ENCODE measurements at regions of chr20 and their contacts with region 1.

Region 1: DNA sequence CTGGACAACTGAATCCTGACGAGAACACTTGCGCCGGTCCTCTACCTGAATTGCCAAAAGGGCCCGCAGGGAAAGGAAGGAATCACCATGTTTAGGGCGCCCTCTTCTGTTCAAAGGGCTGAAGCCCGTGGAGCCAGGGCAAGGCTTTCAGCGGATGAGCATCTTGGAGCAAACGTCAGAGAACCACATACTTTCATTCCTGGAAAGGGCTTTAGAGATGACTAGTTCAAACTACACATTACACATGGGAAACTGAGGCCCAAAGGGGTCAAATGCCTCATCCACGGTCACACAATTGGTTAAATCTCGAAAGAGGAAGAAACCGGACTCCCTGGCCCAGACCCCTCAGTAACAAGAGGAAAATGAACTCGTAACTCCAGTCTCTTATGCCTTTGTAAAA is 11.5 kb upstream of the ZNF133 start:
- DNase-seq: peak; percentile 70 to 87
- H3K4me3 ChIP-seq: no peak overlapping the region
- H3K27ac ChIP-seq: no peak overlapping the region
- H3K4me1 ChIP-seq: peaks cover 15% of the 10 kb centered on the region
- H3K27me3 ChIP-seq: no peaks in the 10 kb centered on the region
- CTCF ChIP-seq: peak; percentile 96

Region 2: DNA sequence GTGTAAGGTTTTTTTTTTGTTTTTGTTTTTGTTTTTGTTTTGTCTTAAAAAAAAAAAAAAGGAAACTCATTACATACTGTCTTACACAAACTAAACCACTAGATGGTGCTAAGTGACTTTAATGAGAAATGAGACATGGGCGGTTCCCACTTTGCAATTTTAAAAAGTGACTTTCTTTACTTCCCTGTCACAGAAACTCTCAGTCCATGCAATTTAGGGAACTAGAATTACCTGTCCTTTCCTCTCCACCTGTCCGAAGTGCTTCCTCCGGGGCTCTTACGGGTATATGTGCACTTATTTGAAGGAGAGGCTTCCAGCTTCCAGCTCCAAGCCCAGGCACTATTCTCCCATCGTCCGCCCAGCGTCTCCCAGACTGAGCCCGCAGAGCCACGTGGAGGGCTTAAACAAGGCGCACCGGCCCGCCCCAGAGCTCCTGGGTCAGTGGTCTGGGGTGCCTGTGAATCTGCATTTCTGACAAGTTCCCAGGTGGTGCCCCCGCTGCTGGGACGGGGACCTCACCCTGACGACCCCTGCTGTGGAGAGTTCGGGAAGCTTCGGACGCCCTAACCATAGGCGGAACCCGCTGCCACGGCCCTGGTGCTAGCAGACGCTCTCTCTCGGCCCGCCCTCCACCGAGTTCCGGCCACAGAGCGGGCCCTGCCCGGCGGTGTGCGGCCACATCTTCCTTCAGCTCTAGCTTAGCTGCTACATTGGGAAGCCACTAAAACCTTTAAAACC is 771.8 kb before region 1 on chr20:
- CTCF ChIA-PET with region 1: no interaction called
- POLR2A ChIA-PET with region 1: no interaction called
- intact Hi-C with region 1: loop called (anchors 10 kb)
- DNase-seq: peak; percentile 42 to 43
- H3K4me3 ChIP-seq: peak overlapping the region; percentile 54; the same call in 1 of the 2 replicates
- H3K27ac ChIP-seq: no peak overlapping the region
- H3K4me1 ChIP-seq: 0 out of 2 replicates have a peak, but pooled peaks cover 5% of the 10 kb centered on the region
- H3K27me3 ChIP-seq: no peaks in the 10 kb centered on the region
- CTCF ChIP-seq: peak; percentile 85

Region 3: DNA sequence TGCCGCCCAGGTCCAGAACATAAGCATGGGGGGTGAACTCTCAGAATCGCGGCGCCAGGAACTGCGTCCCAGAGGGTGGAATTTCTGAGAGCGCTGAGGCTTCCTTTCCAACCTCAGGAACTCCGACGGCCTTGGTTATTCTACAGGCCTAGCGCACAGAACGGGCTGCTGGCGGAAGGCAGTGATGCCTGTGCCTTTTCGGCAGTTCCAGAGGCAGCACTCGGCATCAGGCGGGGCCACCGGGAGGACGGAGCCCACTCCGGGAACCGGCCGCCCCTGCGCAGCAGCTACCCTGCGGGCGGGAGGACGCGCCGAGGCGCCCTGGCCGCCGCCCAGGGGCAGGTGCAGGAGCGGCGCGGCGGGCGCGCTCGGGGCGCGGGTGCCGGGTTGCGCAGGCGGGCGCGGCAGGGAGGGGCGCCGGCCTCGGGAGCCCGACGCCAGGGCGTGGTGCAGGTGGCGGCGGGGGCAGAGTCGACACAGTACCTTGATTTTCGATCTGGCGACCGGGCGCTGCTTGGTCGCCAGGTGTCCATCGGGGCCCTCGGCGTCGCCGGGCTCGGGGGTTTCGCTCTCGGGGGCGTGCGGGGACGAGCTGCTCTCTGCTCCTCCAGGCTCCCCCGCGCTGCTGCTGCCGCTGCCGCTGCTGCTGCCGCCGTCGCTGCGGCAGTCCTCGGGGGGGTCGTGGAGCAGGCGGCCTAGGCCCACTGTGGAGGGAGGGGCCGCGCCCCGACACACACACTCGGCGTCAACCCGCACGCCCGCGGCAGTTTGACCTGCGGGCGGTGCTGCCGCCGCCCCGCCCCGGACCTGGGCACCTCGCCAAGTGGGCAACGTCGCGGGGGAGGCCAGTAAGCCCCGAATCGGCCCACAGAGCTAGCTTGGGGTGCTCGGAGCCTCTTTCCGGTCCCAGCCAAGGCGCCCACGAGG is 220.4 kb before region 1 on chr20:
- CTCF ChIA-PET with region 1: no interaction called
- POLR2A ChIA-PET with region 1: no interaction called
- intact Hi-C with region 1: loop called (anchors 2 kb)
- DNase-seq: peak in 1 of 2 experiments; percentile 70
- H3K4me3 ChIP-seq: peak overlapping the region; percentile 95
- H3K27ac ChIP-seq: no peak overlapping the region
- H3K4me1 ChIP-seq: peaks cover 52% of the 10 kb centered on the region
- H3K27me3 ChIP-seq: no peaks in the 10 kb centered on the region
- CTCF ChIP-seq: no peak

Region 4: GRCh38 chr20:18197382-18198131 is 79.3 kb before region 1 on chr20:
- CTCF ChIA-PET with region 1: interaction called, 5 read pairs
- POLR2A ChIA-PET with region 1: interaction called, 5 read pairs
- intact Hi-C with region 1: loop called (anchors 1 kb)
- DNase-seq: peak; percentile 91 to 96
- H3K4me3 ChIP-seq: peak overlapping the region; percentile 26; the same call in 1 of the 2 replicates
- H3K27ac ChIP-seq: peak overlapping the region; percentile 86
- H3K4me1 ChIP-seq: peaks cover 22% of the 10 kb centered on the region
- H3K27me3 ChIP-seq: no peaks in the 10 kb centered on the region
- CTCF ChIP-seq: peak; percentile 43

Region 5: DNA sequence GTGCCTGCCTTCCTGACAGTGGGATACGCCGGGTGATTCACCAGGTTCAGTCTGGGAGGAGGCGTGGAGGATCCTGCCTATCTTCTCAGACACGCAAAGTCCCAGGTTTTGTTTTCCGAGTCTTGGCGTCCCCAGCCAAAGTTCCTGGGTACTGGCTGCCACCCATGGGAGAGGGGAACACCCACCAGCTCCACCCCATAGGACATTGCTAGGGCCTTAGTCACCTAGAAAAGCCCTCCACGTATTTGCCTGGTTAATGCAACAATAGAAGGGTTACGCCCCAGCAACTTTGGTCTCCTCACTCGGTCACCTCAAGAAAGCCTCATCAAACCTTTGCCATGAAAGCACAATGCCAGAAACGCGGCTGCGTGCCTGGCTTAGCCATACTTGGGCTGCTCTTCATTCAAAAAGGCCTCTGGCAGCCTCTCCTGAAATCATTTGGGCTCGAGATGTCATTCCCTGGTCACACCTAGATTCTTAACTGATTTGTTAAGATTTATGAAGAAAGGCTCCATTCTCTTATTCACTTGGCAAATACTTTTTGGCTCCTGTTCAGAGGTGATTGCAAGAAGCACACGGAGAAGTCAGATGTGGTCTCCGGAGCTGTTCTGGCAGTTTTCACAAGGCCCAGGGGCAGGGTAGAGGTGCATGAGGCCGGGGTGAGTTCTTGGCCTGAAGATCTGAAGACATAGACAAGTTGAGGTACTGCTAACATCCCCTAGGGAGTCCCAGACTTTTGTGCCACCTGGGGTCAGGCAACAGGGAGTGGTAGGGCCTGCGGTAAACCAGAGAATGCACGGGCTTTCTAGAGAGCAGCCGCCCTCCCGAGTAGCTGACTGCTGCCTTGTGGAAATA is 24.0 kb before region 1 on chr20:
- CTCF ChIA-PET with region 1: no interaction called
- POLR2A ChIA-PET with region 1: no interaction called
- intact Hi-C with region 1: loop called (anchors 1 kb)
- DNase-seq: peak; percentile 95 to 100
- H3K4me3 ChIP-seq: peak overlapping the region; percentile 34; the same call in 1 of the 2 replicates
- H3K27ac ChIP-seq: peak overlapping the region; percentile 96
- H3K4me1 ChIP-seq: peaks cover 40% of the 10 kb centered on the region
- H3K27me3 ChIP-seq: no peaks in the 10 kb centered on the region
- CTCF ChIP-seq: no peak

Region 6: DNA sequence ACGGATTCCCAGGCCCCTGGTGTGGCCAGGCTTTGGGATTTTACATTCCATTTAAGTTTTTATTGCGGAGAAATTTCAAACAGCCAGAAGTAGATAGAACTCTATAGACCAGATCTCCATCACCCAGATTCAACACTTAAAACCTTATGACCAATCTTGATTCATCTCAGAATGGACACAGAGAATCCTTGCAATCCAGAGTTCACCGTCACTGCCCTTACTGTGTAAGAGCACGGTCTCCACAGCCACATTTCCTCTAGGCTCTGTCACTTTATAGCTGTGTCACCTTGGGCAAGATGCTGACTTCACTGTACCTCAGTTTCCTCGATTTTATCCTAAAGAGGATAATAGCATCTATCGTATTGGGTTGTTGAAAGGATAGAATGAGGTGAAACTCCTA is 12.5 kb after region 1 on chr20:
- CTCF ChIA-PET with region 1: no interaction called
- POLR2A ChIA-PET with region 1: no interaction called
- intact Hi-C with region 1: no loop called
- DNase-seq: no peak
- H3K4me3 ChIP-seq: peak overlapping the region; percentile 87
- H3K27ac ChIP-seq: no peak overlapping the region
- H3K4me1 ChIP-seq: peaks cover 18% of the 10 kb centered on the region
- H3K27me3 ChIP-seq: no peaks in the 10 kb centered on the region
- CTCF ChIP-seq: no peak

Region 7: DNA sequence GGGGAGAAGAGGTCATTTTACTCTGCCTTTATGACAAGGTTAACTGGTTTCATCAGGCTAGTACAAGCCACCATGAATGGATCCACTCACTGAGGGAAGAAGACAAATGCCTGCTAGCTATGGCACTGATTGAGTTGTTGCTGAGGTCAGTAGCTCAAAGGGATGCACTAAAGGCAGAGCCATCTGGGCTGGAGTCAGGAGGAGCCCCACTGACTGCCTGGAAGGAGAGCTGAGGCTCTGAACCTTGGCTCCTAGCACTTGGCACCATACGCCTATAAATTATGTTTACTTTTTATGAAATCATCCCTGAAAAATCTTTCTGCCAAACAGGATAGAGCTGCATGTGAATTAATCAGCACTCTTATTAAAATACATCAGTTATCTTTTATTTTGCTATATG is 415.6 kb after region 1 on chr20:
- CTCF ChIA-PET with region 1: no interaction called
- POLR2A ChIA-PET with region 1: no interaction called
- intact Hi-C with region 1: no loop called
- DNase-seq: no peak
- H3K4me3 ChIP-seq: no peak overlapping the region
- H3K27ac ChIP-seq: no peak overlapping the region
- H3K4me1 ChIP-seq: no peaks in the 10 kb centered on the region
- H3K27me3 ChIP-seq: no peaks in the 10 kb centered on the region
- CTCF ChIP-seq: no peak